CD4-positive, alpha-beta memory T cell (primary cell): ENCODE measurements at regions of chr11 and their contacts with region 1.

Region 1: GRCh38 chr11:128725630-128726319 is 31.9 kb downstream of the FLI1 start:
- DNase-seq: peak; percentile 84 to 89 (median 88)
- H3K4me3 ChIP-seq: peak overlapping the region; percentile 55 to 58
- H3K4me3 Mint-ChIP-seq: peak overlapping the region; percentile 78 to 92 (median 87)
- H3K27ac ChIP-seq: peak overlapping the region; percentile 49
- H3K27ac Mint-ChIP-seq: peak overlapping the region; percentile 91 to 98 (median 95)
- H3K4me1 ChIP-seq: peaks cover 99% of the 10 kb centered on the region
- H3K4me1 Mint-ChIP-seq: peaks cover 87 to 100% (median 97%) of the 10 kb centered on the region in 4 donors
- H3K27me3 ChIP-seq: no peaks in the 10 kb centered on the region
- H3K27me3 Mint-ChIP-seq: peaks cover 0 to 3% of the 10 kb centered on the region in 2 donors

Region 2: GRCh38 chr11:128707681-128708080 is 18.1 kb before region 1 on chr11:
- CTCF ChIA-PET with region 1: interaction called, 20 read pairs
- POLR2A ChIA-PET with region 1: interaction called, 373 read pairs
- intact Hi-C with region 1: no loop called
- DNase-seq: no peak
- H3K4me3 ChIP-seq: no peak overlapping the region
- H3K4me3 Mint-ChIP-seq: peak overlapping the region in 5 of 8 donors; percentile 17 to 75 (median 58)
- H3K27ac ChIP-seq: no peak overlapping the region
- H3K27ac Mint-ChIP-seq: peak overlapping the region; percentile 20 to 81 (median 69)
- H3K4me1 ChIP-seq: peaks cover 100% of the 10 kb centered on the region
- H3K4me1 Mint-ChIP-seq: peaks cover 78 to 99% (median 94%) of the 10 kb centered on the region in 4 donors
- H3K27me3 ChIP-seq: no peaks in the 10 kb centered on the region
- H3K27me3 Mint-ChIP-seq: no peaks in the 10 kb centered on the region

Region 3: GRCh38 chr11:128738942-128739341 is 13.2 kb after region 1 on chr11:
- CTCF ChIA-PET with region 1: interaction called, 15 read pairs
- POLR2A ChIA-PET with region 1: interaction called, 373 read pairs
- intact Hi-C with region 1: loop called (anchors 1 kb)
- DNase-seq: peak; percentile 36 to 51 (median 48)
- H3K4me3 ChIP-seq: peak overlapping the region in 1 of 2 donors; percentile 5
- H3K4me3 Mint-ChIP-seq: peak overlapping the region; percentile 61 to 84 (median 76)
- H3K27ac ChIP-seq: peak overlapping the region; percentile 30
- H3K27ac Mint-ChIP-seq: peak overlapping the region; percentile 82 to 95 (median 94)
- H3K4me1 ChIP-seq: peaks cover 96% of the 10 kb centered on the region
- H3K4me1 Mint-ChIP-seq: peaks cover 71 to 99% (median 82%) of the 10 kb centered on the region in 4 donors
- H3K27me3 ChIP-seq: no peaks in the 10 kb centered on the region
- H3K27me3 Mint-ChIP-seq: no peaks in the 10 kb centered on the region